ENCODE measurements at regions of chr10 and their contacts with region 1.

Region 1: GRCh38 chr10:55263327-55263726 is 462.3 kb upstream of the PCDH15 start:
- DNase-seq: no peak
- H3K4me3 ChIP-seq: no peak overlapping the region
- H3K4me3 Mint-ChIP-seq: no peak overlapping the region
- H3K27ac Mint-ChIP-seq: no peak overlapping the region
- H3K4me1 ChIP-seq: no peaks in the 10 kb centered on the region
- H3K4me1 Mint-ChIP-seq: no peaks in the 10 kb centered on the region
- H3K27me3 ChIP-seq: no peaks in the 10 kb centered on the region
- H3K27me3 Mint-ChIP-seq: peaks cover 9% of the 10 kb centered on the region
- CTCF ChIP-seq: peak in 1 of 2 experiments; percentile 0

Region 2: GRCh38 chr10:53839440-53840039 is 1423.8 kb before region 1 on chr10:
- CTCF ChIA-PET with region 1: no interaction called
- POLR2A ChIA-PET with region 1: no interaction called
- intact Hi-C with region 1: loop called (anchors 2 kb)
- DNase-seq: peak in 1 of 2 experiments; percentile 47
- H3K4me3 ChIP-seq: no peak overlapping the region
- H3K4me3 Mint-ChIP-seq: no peak overlapping the region
- H3K27ac Mint-ChIP-seq: no peak overlapping the region
- H3K4me1 ChIP-seq: no peaks in the 10 kb centered on the region
- H3K4me1 Mint-ChIP-seq: no peaks in the 10 kb centered on the region
- H3K27me3 ChIP-seq: no peaks in the 10 kb centered on the region
- H3K27me3 Mint-ChIP-seq: no peaks in the 10 kb centered on the region
- CTCF ChIP-seq: peak; percentile 54 to 65

Region 3: GRCh38 chr10:55063811-55064210 is 199.5 kb before region 1 on chr10:
- CTCF ChIA-PET with region 1: no interaction called
- POLR2A ChIA-PET with region 1: no interaction called
- intact Hi-C with region 1: no loop called
- DNase-seq: no peak
- H3K4me3 ChIP-seq: no peak overlapping the region
- H3K4me3 Mint-ChIP-seq: no peak overlapping the region
- H3K27ac Mint-ChIP-seq: no peak overlapping the region
- H3K4me1 ChIP-seq: peaks cover 27% of the 10 kb centered on the region
- H3K4me1 Mint-ChIP-seq: peaks cover 7% of the 10 kb centered on the region
- H3K27me3 ChIP-seq: no peaks in the 10 kb centered on the region
- H3K27me3 Mint-ChIP-seq: no peaks in the 10 kb centered on the region
- CTCF ChIP-seq: no peak

Region 4: DNA sequence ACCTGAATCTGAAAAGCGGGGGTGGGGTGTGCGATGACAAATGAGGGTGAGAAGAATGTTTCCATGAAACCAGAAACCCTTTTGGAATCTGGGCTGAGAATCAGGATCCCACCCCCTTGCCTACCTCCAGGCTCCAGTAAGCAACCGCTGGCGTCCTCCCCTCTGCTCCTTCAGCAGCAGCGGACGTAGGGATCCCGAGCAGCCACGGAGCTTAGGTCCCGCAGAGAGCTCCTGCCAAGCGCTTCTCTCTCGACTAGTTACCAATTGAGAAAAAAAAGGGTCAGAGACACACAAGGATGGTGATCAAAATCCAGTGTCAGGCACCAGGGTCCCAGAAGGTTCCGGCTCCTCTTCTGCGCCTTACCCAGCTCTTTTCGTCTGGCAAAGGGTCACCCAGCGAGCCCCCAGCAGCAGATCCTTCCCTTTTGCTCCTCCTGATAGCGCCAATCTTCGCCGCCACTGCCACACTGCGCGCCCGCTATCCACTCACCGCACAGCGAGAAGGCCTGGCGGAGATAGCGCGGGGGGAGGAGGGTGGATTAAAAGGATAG is 364.2 kb after region 1 on chr10:
- CTCF ChIA-PET with region 1: no interaction called
- POLR2A ChIA-PET with region 1: no interaction called
- intact Hi-C with region 1: no loop called
- DNase-seq: no peak
- H3K4me3 ChIP-seq: no peak overlapping the region
- H3K4me3 Mint-ChIP-seq: no peak overlapping the region
- H3K27ac Mint-ChIP-seq: no peak overlapping the region
- H3K4me1 ChIP-seq: no peaks in the 10 kb centered on the region
- H3K4me1 Mint-ChIP-seq: no peaks in the 10 kb centered on the region
- H3K27me3 ChIP-seq: no peaks in the 10 kb centered on the region
- H3K27me3 Mint-ChIP-seq: peaks cover 5% of the 10 kb centered on the region
- CTCF ChIP-seq: no peak

Region 5: GRCh38 chr10:55766212-55766611 is 502.9 kb after region 1 on chr10:
- CTCF ChIA-PET with region 1: no interaction called
- POLR2A ChIA-PET with region 1: interaction called, 12 read pairs
- intact Hi-C with region 1: no loop called
- DNase-seq: no peak
- H3K4me3 ChIP-seq: no peak overlapping the region
- H3K4me3 Mint-ChIP-seq: no peak overlapping the region
- H3K27ac Mint-ChIP-seq: no peak overlapping the region
- H3K4me1 ChIP-seq: no peaks in the 10 kb centered on the region
- H3K4me1 Mint-ChIP-seq: no peaks in the 10 kb centered on the region
- H3K27me3 ChIP-seq: no peaks in the 10 kb centered on the region
- H3K27me3 Mint-ChIP-seq: no peaks in the 10 kb centered on the region
- CTCF ChIP-seq: no peak

Measured in Caco-2 (cell line).